Mammary epithelial cell (primary cell): ENCODE measurements at regions of chr9 and their contacts with region 1.

Region 1: DNA sequence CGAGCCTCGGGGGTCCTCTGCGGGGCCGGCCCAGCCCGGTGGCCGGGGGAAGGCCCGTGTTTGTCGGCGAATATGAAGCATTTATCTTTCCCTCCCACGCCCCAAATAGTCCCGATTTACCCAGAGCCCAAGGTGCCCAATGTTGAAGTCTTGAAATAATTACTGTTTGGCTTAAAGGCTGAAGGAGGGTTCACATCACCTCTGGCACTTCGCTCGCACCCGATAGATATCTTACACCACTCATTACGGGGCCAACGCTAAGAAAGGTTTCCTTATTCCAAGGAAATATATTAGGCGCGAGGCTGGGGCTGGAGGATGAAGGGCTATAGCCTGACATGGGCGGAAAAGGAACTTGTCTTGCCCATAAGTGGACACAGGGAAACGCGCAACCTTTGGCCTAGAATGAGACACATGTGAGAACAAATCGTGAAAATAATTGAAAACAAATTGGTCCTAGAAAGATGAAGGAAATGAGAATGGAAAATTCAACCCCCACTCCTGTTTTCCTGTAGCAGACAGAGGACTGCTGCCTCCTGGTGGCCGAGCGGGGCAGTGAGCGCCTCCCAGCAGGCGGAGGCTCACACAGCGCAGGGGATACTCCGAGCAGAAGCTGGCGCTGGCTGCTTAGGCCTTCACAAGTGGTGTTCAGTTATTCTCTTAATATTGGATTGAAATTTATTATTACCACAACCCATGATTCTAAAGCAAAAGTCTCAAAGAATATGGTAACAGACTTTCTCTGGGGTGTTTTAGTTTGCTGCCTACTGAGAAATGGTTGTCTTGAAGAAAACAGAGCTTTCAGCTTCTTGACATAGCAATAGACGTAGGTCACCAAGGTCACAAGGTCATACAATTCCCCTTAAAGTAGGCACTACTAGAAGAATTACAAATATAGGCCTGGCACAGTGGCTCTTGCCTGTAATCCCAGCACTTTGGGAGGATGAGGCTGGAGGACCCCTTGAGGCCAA is 7.9 kb downstream of the CCL21 start:
- DNase-seq: peak; percentile 61
- H3K4me3 ChIP-seq: peak overlapping the region; percentile 51 to 60 (median 60)
- H3K27ac ChIP-seq: no peak overlapping the region
- H3K4me1 ChIP-seq: peaks cover 5% of the 10 kb centered on the region
- H3K27me3 ChIP-seq: no peaks in the 10 kb centered on the region
- CTCF ChIP-seq: peak; percentile 99

Region 2: GRCh38 chr9:34536685-34537084 is 165.4 kb before region 1 on chr9:
- CTCF ChIA-PET with region 1: no interaction called
- dilution Hi-C with region 1: no loop called
- in situ Hi-C with region 1: no loop called
- intact Hi-C with region 1: no loop called
- DNase-seq: no peak
- H3K4me3 ChIP-seq: no peak overlapping the region
- H3K27ac ChIP-seq: no peak overlapping the region
- H3K4me1 ChIP-seq: peaks cover 9% of the 10 kb centered on the region
- H3K27me3 ChIP-seq: peaks cover 3% of the 10 kb centered on the region
- CTCF ChIP-seq: no peak

Region 3: DNA sequence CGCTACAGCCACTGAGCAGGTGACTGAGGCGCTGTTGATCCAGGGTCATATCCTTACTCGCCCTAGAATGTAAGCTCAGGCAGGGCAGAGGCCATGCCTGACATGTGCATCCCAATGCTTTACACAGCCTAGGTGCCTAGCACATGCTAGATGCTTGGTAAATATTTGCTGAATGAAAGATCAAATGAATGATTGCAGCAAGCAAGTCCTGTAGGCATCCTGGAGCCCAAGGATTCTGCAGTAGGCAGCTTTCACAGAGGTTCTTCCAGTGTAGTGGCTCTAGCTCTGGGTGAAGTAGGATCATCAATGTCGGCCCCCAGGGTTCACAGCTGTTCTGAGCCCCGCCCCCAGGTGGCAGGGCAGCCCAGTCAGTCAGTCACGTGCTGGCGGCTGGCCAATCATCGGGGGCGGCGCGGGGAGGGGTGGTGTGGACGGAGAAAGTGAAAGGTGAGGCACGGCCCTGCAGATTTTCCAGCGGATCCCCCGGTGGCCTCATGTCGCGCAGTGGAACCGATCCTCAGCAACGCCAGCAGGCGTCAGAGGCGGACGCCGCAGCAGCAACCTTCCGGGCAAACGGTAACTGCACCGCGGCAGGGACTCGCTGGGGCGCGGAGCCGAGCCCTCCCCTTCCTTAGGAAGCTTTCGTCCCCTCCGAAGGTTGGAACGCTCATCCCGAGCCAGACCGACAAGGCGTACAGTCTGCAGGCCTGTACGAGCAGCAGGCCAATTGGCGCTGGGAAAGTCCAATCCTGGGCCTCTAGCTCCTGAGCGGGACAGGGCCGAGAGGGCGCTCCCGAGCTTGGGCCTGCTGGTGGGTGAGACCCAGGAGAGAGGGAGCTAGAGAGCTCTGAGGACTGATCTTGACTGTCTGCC is 55.6 kb before region 1 on chr9 and contains the start of gene GALT:
- CTCF ChIA-PET with region 1: interaction called, 4 read pairs
- dilution Hi-C with region 1: no loop called
- in situ Hi-C with region 1: no loop called
- intact Hi-C with region 1: loop called (anchors 1 kb)
- DNase-seq: peak; percentile 85
- H3K4me3 ChIP-seq: peak within 1 kb of the TSS; percentile 70 to 88 (median 75)
- H3K27ac ChIP-seq: peak within 1 kb of the TSS; percentile 59
- H3K4me1 ChIP-seq: peaks cover 14% of the 10 kb centered on the region
- H3K27me3 ChIP-seq: no peaks in the 10 kb centered on the region
- CTCF ChIP-seq: peak; percentile 10 to 49
- total RNA-seq, gene GALT: 29.5 to 30.2 TPM

Region 4: GRCh38 chr9:34744295-34745221 is 42.5 kb after region 1 on chr9:
- CTCF ChIA-PET with region 1: interaction called, 3 read pairs
- dilution Hi-C with region 1: no loop called
- in situ Hi-C with region 1: no loop called
- intact Hi-C with region 1: loop called (anchors 1 kb)
- DNase-seq: peak; percentile 98
- H3K4me3 ChIP-seq: peak overlapping the region in 1 of 3 experiments; percentile 10
- H3K27ac ChIP-seq: peak overlapping the region; percentile 60
- H3K4me1 ChIP-seq: peaks cover 40% of the 10 kb centered on the region
- H3K27me3 ChIP-seq: no peaks in the 10 kb centered on the region
- CTCF ChIP-seq: no peak

Region 5: GRCh38 chr9:34862043-34862442 is 160.0 kb after region 1 on chr9:
- CTCF ChIA-PET with region 1: interaction called, 6 read pairs
- dilution Hi-C with region 1: no loop called
- in situ Hi-C with region 1: loop called in 1 of 2 experiments (anchors 25 kb)
- intact Hi-C with region 1: loop called (anchors 1 kb)
- DNase-seq: no peak
- H3K4me3 ChIP-seq: no peak overlapping the region
- H3K27ac ChIP-seq: no peak overlapping the region
- H3K4me1 ChIP-seq: no peaks in the 10 kb centered on the region
- H3K27me3 ChIP-seq: no peaks in the 10 kb centered on the region
- CTCF ChIP-seq: no peak

Region 6: DNA sequence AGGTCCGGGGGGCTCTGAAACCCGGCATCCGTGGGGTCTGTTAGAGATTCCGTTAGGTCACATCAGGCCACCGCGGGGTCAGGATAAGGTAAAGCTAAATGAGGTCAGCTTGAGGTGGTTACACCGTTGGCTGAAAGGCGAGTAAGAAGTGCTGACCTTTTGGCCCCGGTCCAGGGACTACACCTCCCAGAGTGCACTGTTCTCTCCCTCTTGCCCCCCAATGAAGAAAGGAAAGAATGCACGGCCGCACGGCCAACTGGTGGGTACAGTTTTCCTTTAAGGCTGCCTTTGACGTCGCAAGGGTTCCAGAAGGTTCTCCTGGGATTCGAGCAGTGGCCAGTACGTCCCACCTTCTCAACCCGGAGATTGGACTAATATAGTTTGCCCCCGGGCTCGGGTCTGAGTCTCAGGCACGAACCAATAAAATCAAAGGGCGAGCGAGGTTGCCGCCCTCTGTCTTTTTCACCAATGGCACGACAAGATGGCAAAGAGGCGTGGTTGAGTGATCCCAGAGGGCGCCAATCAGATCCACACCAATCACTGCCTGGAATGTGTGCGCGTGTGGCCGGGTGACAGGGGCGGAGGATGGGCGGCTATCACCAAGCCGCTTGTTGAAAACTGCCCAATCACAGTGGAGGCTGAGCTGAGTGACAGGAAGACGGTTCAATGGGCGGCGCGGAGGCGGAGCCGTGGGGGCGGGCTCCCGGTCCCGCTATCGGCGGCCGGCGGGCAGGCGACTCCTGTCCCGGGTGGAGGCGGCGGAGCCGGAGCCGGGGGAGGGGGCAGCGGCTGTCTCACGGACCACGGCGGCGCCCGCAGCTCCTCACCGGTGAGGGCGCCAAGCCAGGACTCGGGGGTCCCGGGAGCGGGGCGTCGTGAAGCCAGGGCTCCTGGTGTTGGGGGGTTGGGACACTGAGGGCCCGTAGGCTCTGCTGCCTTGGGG is 287.2 kb after region 1 on chr9 and contains the start of gene DNAJB5:
- CTCF ChIA-PET with region 1: no interaction called
- dilution Hi-C with region 1: no loop called
- in situ Hi-C with region 1: no loop called
- intact Hi-C with region 1: loop called (anchors 2 kb)
- DNase-seq: peak; percentile 99
- H3K4me3 ChIP-seq: peak within 1 kb of the TSS; percentile 63 to 88 (median 72)
- H3K27ac ChIP-seq: peak within 1 kb of the TSS; percentile 52
- H3K4me1 ChIP-seq: peaks cover 41% of the 10 kb centered on the region
- H3K27me3 ChIP-seq: no peaks in the 10 kb centered on the region
- CTCF ChIP-seq: no peak
- total RNA-seq, gene DNAJB5: 8.4 to 10.0 TPM